Caco-2 (cell line): ENCODE measurements at regions of chr2 and their contacts with region 1.

Region 1: DNA sequence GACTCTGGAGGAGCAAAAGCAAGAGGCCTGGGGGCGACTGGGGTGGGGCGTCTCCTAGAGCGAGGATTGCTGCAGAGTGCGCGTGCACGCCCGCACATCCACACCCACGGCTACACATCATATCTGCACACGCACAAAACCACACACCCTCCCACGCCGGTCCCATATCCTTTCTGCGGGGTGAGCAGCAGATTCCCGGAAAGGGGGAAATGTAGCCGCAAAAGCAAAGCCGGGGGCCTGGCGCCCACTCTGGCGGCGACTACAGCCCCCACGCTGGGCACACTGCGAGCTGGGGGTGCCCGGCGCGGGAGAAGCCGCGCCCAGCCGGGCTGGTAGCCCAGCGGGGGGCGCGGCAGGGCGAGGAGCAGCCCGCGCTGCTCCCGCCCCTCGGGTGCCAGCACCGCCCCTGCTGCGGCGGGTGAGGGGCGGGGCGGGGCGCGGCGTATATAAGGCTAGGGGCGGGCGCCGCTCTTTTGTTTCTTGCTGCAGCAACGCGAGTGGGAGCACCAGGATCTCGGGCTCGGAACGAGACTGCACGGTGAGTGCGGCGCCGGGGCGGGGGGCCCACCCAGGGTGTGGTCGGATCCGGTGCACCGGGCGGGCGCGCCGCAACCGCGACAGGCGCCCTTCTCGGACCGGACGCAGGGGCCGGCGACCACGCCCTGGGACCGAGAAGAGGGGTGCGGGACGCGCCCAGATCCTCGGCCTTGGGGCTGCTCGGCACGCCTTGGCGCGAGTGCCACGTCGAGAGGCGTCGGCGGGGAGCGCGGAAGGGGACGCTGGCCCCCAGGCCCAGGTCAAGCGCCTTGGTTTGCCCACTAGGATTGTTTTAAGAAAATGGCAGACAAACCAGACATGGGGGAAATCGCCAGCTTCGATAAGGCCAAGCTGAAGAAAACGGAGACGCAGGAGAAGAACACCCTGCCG is at the start of gene TMSB10:
- DNase-seq: peak; percentile 88 to 92
- H3K4me3 ChIP-seq: peak within 1 kb of the TSS; percentile 93
- H3K4me3 Mint-ChIP-seq: peak within 1 kb of the TSS; percentile 88
- H3K27ac Mint-ChIP-seq: peak within 1 kb of the TSS; percentile 93
- H3K4me1 ChIP-seq: peaks cover 14% of the 10 kb centered on the region
- H3K4me1 Mint-ChIP-seq: peaks cover 21% of the 10 kb centered on the region
- H3K27me3 ChIP-seq: no peaks in the 10 kb centered on the region
- H3K27me3 Mint-ChIP-seq: no peaks in the 10 kb centered on the region
- CTCF ChIP-seq: peak in 1 of 2 experiments; percentile 0
- total RNA-seq, gene TMSB10: 1,258 and 1,458 TPM in 2 replicates

Region 2: DNA sequence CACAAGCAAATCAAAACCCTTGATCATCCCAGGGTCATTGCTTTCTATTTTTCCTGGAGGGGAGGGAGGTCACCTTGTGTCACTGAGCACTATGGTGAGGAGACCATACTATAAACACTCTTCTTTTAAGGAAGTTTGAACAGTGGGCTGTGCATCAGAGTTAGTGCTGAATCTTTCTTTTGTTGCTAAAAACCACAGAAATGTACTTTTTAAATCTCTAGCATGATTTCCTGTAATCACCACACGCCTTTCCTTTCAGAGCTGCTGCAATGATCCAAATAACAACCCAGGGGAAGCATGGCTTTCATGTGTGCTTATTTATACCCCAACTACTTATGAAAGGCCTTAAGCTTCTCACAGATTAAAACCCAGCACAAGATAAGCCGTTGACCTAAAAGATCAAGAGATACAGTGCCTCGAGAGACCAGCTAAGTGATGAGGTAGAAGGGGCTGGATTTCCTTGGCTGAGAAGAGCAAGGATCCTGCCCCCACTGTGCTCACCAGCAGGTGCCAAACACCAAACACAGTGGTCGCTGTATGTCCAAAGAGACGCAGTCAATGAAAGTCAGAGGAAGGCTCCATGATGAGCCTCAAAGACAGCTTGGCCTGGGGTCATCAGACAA is 59.3 kb before region 1 on chr2:
- CTCF ChIA-PET with region 1: no interaction called
- POLR2A ChIA-PET with region 1: no interaction called
- intact Hi-C with region 1: no loop called
- DNase-seq: no peak
- H3K4me3 ChIP-seq: no peak overlapping the region
- H3K4me3 Mint-ChIP-seq: no peak overlapping the region
- H3K27ac Mint-ChIP-seq: no peak overlapping the region
- H3K4me1 ChIP-seq: no peaks in the 10 kb centered on the region
- H3K4me1 Mint-ChIP-seq: no peaks in the 10 kb centered on the region
- H3K27me3 ChIP-seq: no peaks in the 10 kb centered on the region; the same call in none of the 2 replicates
- H3K27me3 Mint-ChIP-seq: peaks cover 14% of the 10 kb centered on the region
- CTCF ChIP-seq: no peak

Region 3: DNA sequence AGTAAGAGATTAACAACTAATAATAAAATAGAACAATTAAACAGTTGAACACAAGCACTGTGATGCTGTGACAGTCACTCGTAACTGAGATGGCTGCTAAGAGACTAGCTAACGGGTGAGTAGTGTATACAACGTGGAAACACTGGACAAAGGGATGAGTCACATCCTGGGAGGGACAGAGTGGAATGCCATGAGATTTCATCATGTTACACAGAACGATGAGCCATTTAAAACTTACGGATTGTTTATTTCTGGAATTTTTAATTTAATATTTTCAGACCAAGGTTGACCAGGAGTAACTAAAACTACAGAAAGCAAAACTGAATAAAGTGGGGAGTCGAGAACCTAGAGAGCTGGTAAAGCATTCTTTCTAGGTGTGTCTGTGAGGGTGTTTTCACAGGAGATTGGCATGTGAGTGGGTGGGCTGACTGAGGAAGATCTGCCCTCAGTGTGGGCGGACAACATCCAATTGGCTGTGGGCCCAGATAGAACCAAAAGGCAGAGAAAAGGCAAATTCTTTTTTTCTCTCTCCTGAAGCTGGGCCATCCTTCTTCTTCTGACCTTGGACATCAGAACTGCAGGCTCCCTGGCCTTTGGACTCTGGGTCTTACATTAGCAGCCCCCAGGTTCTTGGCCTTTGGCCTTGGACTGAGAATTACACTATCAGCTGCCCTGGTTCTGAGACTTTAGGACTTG is 14.6 kb after region 1 on chr2:
- CTCF ChIA-PET with region 1: no interaction called
- POLR2A ChIA-PET with region 1: interaction called, 7 read pairs
- intact Hi-C with region 1: loop called (anchors 1 kb)
- DNase-seq: peak; percentile 67 to 70
- H3K4me3 ChIP-seq: no peak overlapping the region
- H3K4me3 Mint-ChIP-seq: peak overlapping the region; percentile 68
- H3K27ac Mint-ChIP-seq: peak overlapping the region; percentile 99
- H3K4me1 ChIP-seq: peaks cover 14% of the 10 kb centered on the region
- H3K4me1 Mint-ChIP-seq: peaks cover 15% of the 10 kb centered on the region
- H3K27me3 ChIP-seq: no peaks in the 10 kb centered on the region
- H3K27me3 Mint-ChIP-seq: no peaks in the 10 kb centered on the region
- CTCF ChIP-seq: no peak

Region 4: DNA sequence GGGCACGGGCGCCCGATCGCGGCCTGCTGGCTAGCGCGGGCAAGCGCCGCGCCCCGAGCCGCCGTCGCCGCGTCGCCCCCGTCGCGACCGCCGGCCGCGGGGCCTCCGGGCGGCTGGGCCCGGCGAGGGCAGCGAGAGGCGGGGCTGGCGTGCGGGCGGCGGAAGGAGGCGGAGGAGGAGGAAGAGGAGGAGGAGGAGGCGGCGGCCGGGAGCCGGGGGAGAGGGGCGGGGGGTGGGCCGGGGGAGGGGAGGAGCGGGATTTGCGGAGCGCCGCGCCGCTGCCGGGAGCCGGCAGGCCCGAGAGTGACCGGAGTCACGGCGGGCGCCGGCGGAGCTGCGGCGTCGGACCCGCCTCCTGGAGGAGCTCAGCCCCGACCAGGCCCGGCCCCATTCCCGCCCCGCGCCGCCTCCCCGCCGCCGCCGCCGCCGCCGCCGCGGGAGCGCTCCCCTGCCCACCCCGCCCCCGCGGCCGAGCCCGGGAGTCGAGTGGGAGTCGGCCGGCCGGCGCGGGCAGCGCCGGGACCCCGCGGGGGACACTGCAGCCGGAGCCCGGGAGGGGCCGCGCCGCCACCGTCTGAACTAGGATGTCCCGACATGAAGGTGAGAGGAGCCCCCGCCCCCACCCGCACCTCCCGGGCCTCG is 65.5 kb after region 1 on chr2 and contains the start of gene KCMF1:
- CTCF ChIA-PET with region 1: no interaction called
- POLR2A ChIA-PET with region 1: no interaction called
- intact Hi-C with region 1: loop called (anchors 2 kb)
- DNase-seq: peak; percentile 85 to 86
- H3K4me3 ChIP-seq: peak within 1 kb of the TSS; percentile 95
- H3K4me3 Mint-ChIP-seq: peak within 1 kb of the TSS; percentile 95
- H3K27ac Mint-ChIP-seq: peak within 1 kb of the TSS; percentile 98
- H3K4me1 ChIP-seq: peaks cover 27% of the 10 kb centered on the region
- H3K4me1 Mint-ChIP-seq: peaks cover 7% of the 10 kb centered on the region
- H3K27me3 ChIP-seq: no peaks in the 10 kb centered on the region
- H3K27me3 Mint-ChIP-seq: no peaks in the 10 kb centered on the region
- CTCF ChIP-seq: no peak
- total RNA-seq, gene KCMF1: 81.5 and 83.4 TPM in 2 replicates